CD8-positive, alpha-beta memory T cell (primary cell): ENCODE measurements at regions of chr17 and their contacts with region 1.

Region 1: GRCh38 chr17:28763804-28764266 is 20.0 kb downstream of the TRAF4 start:
- DNase-seq: peak; percentile 63 to 84 (median 70)
- H3K4me3 ChIP-seq: no peak overlapping the region
- H3K4me3 Mint-ChIP-seq: no peak overlapping the region
- H3K27ac ChIP-seq: no peak overlapping the region
- H3K27ac Mint-ChIP-seq: peak overlapping the region; percentile 31 to 90 (median 76)
- H3K4me1 ChIP-seq: no peaks in the 10 kb centered on the region
- H3K4me1 Mint-ChIP-seq: peaks cover 2 to 6% (median 4%) of the 10 kb centered on the region in 3 donors
- H3K27me3 ChIP-seq: no peaks in the 10 kb centered on the region
- H3K27me3 Mint-ChIP-seq: no peaks in the 10 kb centered on the region

Region 2: DNA sequence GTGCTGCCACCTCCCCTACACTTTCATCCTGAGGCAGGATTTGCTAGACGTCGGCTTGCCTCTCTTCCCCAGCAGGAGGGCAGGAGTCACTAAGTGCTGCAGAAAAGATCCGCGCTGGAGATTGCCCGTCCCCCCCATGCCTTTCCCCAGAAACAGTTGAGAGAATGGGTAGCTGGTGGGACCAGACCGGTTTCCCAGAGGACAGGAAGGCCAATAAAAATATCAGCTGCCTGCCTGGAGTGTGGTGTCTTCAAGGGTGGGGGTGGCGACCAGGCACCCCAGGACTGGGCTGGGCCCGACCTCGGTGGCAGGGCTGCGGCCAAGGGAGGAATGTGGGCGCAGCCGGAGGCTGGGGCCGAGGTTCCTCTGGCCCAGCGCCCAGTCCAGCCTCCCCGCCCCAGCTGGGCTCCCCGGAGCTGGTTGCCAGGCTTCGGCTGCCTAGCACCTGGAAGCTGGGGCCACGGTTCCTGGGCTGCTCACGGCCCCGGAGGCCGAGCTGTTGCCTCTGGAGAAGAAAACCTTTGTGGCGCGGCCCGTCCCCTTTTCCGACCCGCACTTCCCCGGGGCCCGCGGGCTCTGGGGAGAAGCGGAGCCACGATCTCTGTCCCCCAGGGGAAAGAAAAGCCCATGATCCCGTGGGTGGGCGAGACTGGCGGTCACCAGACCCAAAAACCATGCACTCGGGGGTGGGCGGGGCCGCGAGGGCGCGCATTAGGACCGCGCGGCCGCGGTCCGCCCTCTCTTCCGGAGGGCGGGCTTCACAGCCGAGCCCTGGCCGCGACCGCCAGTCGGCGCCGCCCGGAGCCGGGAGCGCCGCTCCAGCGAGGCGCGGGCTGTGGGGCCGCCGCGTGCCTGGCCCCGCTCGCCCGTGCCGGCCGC is 20.4 kb before region 1 on chr17 and contains the start of gene TRAF4:
- CTCF ChIA-PET with region 1: interaction called, 49 read pairs
- POLR2A ChIA-PET with region 1: no interaction called
- DNase-seq: peak; percentile 68 to 82 (median 72)
- H3K4me3 ChIP-seq: peak within 1 kb of the TSS; percentile 91
- H3K4me3 Mint-ChIP-seq: peak within 1 kb of the TSS; percentile 86 to 94 (median 89)
- H3K27ac ChIP-seq: peak within 1 kb of the TSS; percentile 87
- H3K27ac Mint-ChIP-seq: peak within 1 kb of the TSS; percentile 88 to 98 (median 92)
- H3K4me1 ChIP-seq: peaks cover 37% of the 10 kb centered on the region
- H3K4me1 Mint-ChIP-seq: peaks cover 7 to 35% (median 20%) of the 10 kb centered on the region in 3 donors
- H3K27me3 ChIP-seq: no peaks in the 10 kb centered on the region
- H3K27me3 Mint-ChIP-seq: no peaks in the 10 kb centered on the region
- total RNA-seq, gene TRAF4: 176 to 182 TPM

Region 3: GRCh38 chr17:28777178-28777577 is 13.3 kb after region 1 on chr17:
- CTCF ChIA-PET with region 1: interaction called, 26 read pairs
- POLR2A ChIA-PET with region 1: interaction called, 9 read pairs
- DNase-seq: no peak
- H3K4me3 ChIP-seq: no peak overlapping the region
- H3K4me3 Mint-ChIP-seq: no peak overlapping the region
- H3K27ac ChIP-seq: no peak overlapping the region
- H3K27ac Mint-ChIP-seq: peak overlapping the region in 7 of 8 donors; percentile 0 to 66 (median 47)
- H3K4me1 ChIP-seq: peaks cover 14% of the 10 kb centered on the region
- H3K4me1 Mint-ChIP-seq: peaks cover 28 to 47% (median 44%) of the 10 kb centered on the region in 3 donors
- H3K27me3 ChIP-seq: no peaks in the 10 kb centered on the region
- H3K27me3 Mint-ChIP-seq: peaks cover 0 to 1% of the 10 kb centered on the region in 2 donors

Region 4: GRCh38 chr17:28896884-28897768 is 133.3 kb after region 1 on chr17 and contains the start of gene FLOT2:
- CTCF ChIA-PET with region 1: interaction called, 31 read pairs
- POLR2A ChIA-PET with region 1: interaction called, 3 read pairs
- DNase-seq: peak; percentile 49 to 81 (median 68)
- H3K4me3 ChIP-seq: peak within 1 kb of the TSS; percentile 93
- H3K4me3 Mint-ChIP-seq: peak within 1 kb of the TSS; percentile 88 to 99 (median 97)
- H3K27ac ChIP-seq: peak within 1 kb of the TSS; percentile 84
- H3K27ac Mint-ChIP-seq: peak within 1 kb of the TSS; percentile 94 to 98 (median 96)
- H3K4me1 ChIP-seq: peaks cover 72% of the 10 kb centered on the region
- H3K4me1 Mint-ChIP-seq: peaks cover 62 to 80% (median 66%) of the 10 kb centered on the region in 3 donors
- H3K27me3 ChIP-seq: no peaks in the 10 kb centered on the region
- H3K27me3 Mint-ChIP-seq: no peaks in the 10 kb centered on the region
- total RNA-seq, gene FLOT2: 113 to 115 TPM

Region 5: GRCh38 chr17:28916302-28916934 is 152.6 kb after region 1 on chr17:
- CTCF ChIA-PET with region 1: interaction called, 33 read pairs
- POLR2A ChIA-PET with region 1: no interaction called
- DNase-seq: peak in 4 of 5 donors; percentile 20 to 62 (median 38)
- H3K4me3 ChIP-seq: no peak overlapping the region
- H3K4me3 Mint-ChIP-seq: no peak overlapping the region
- H3K27ac ChIP-seq: no peak overlapping the region
- H3K27ac Mint-ChIP-seq: peak overlapping the region; percentile 11 to 87 (median 72)
- H3K4me1 ChIP-seq: no peaks in the 10 kb centered on the region
- H3K4me1 Mint-ChIP-seq: peaks cover 8 to 16% (median 15%) of the 10 kb centered on the region in 3 donors
- H3K27me3 ChIP-seq: no peaks in the 10 kb centered on the region
- H3K27me3 Mint-ChIP-seq: no peaks in the 10 kb centered on the region

Region 6: DNA sequence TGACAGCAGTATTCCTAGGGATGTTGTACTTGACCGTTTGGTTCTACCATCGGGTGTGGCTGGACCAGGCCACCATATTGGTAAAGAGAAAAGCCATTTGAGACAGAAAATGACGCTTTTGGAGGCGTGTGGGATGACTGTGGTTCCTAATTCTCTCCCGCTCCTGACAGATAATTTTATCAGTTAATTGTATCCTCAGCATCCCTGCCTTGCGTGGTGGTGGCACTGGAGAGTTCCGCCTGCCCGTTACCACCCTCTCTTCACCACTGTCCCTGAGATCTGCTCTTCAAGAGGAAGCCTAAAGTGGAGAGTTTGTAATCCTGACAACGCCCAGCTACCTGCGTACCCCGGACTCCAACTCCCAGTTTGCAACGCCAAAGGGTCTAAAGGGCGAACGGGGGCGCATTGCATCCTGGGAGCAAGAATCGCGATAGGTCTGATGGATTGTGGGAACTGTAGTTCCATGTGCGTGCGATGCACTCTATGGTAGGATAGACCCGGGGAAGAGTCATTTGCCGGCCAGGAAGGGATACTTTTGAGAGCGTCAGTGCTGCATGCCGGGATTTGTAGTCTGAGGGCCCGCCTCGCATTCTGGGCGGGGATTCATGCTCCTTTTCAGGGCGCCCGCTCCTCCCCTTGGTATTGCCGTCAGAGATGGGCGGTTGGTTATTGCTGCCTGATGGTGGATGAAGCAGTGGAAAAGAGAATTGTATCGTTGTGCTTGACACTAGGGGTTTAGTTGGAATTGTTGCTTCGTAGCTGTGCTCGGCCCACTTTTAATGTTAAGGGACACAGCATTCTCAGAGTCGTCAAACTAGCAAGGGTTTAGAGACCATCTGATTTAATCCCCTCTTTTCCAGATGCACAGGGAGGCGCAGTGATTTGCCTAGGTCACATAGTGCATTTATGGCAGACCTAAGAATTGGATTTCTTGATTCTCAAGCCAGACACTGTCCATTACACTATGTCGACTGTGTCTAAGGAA is 188.4 kb after region 1 on chr17:
- CTCF ChIA-PET with region 1: interaction called, 17 read pairs
- POLR2A ChIA-PET with region 1: interaction called, 4 read pairs
- DNase-seq: peak; percentile 91 to 98 (median 97)
- H3K4me3 ChIP-seq: peak overlapping the region; percentile 98
- H3K4me3 Mint-ChIP-seq: no peak overlapping the region
- H3K27ac ChIP-seq: peak overlapping the region; percentile 85
- H3K27ac Mint-ChIP-seq: no peak overlapping the region
- H3K4me1 ChIP-seq: peaks cover 27% of the 10 kb centered on the region
- H3K4me1 Mint-ChIP-seq: peaks cover 15 to 17% (median 15%) of the 10 kb centered on the region in 3 donors
- H3K27me3 ChIP-seq: no peaks in the 10 kb centered on the region
- H3K27me3 Mint-ChIP-seq: peaks cover 0 to 4% of the 10 kb centered on the region in 2 donors